Ascending aorta (tissue), 2 donors: ENCODE measurements at regions of chr1 and their contacts with region 1.

Region 1: GRCh38 chr1:115189814-115190539 is 100.7 kb upstream of the TSPAN2 start:
- DNase-seq: peak in 1 of 2 donors; percentile 71
- H3K4me3 ChIP-seq: no peak overlapping the region
- H3K27ac ChIP-seq: peak overlapping the region; percentile 89 to 95
- H3K4me1 ChIP-seq: peaks cover 15 to 34% of the 10 kb centered on the region in 2 donors
- H3K27me3 ChIP-seq: no peaks in the 10 kb centered on the region
- CTCF ChIP-seq: no peak

Region 2: DNA sequence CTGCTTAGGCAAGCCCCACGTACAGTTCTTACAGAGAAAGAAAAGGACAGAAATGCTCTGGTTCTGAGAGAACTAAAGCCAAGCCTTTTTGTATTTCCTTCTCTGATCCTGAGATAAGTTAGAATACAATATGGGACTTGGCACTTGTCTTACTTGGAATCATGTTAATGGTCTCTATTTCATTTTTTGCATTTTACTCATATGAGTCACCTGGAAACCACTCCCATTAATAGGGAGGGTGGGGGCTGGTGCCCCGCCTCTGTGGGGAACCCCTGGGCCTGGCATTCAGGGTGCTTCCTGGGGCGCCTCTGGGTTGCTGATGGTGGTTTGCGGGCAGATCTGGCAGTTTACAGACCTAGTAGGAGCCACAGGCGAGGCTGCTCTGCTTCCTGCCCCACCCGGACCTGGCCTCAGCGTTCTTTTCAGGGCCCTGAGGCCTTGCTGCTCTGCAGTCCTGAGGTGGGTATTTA is 127.4 kb before region 1 on chr1:
- intact Hi-C with region 1: loop called (anchors 10 kb)
- DNase-seq: peak; percentile 36 to 77
- H3K4me3 ChIP-seq: no peak overlapping the region
- H3K27ac ChIP-seq: peak overlapping the region; percentile 86 to 87
- H3K4me1 ChIP-seq: peaks cover 14 to 28% of the 10 kb centered on the region in 2 donors
- H3K27me3 ChIP-seq: no peaks in the 10 kb centered on the region
- CTCF ChIP-seq: no peak

Region 3: DNA sequence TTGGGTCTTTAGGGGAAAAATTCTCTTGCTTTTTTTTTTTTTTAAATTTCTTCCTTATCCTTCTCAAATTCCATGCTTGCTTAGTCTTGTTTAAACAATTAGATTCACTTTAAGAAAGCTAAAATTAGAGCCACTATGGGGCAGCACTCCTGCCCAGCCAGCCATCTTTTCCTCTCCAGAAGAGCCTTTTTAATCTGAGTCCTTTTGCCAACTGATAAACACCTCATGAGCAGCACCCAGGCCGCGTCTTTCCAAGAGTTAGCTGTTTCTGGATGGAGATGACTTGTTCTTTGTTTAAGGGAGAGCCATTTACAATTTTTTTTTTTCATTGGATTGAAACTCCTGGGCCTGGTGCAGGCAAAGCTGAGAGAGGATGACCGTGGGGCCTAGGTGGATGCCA is 47.4 kb before region 1 on chr1:
- intact Hi-C with region 1: no loop called
- DNase-seq: no peak
- H3K4me3 ChIP-seq: no peak overlapping the region
- H3K27ac ChIP-seq: peak overlapping the region; percentile 32 to 62
- H3K4me1 ChIP-seq: peaks cover 3 to 14% of the 10 kb centered on the region in 2 donors
- H3K27me3 ChIP-seq: no peaks in the 10 kb centered on the region
- CTCF ChIP-seq: peak in 1 of 3 experiments; percentile 11

Region 4: DNA sequence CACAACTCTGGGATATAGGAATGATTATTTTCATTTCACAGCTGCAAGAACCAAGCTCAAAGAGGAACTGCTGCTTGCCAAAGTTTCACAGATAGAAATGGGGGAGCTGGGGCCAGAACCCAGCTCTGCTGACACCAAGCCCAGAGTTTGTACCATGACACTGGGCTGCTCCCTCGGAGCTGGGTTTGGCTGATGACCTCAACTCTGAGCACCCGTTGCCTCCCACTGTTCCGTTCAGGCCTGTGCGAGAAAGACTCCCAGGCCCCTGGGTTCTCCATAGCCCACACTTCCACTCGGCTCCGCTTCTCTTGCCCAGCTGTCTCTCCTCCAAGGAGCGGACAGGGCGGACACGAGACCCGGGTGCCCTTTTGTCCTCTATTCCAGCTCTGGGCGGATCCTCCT is 92.8 kb after region 1 on chr1:
- intact Hi-C with region 1: loop called (anchors 5 kb)
- DNase-seq: peak; percentile 61 to 85
- H3K4me3 ChIP-seq: peak overlapping the region; percentile 4 to 51
- H3K27ac ChIP-seq: peak overlapping the region; percentile 91 to 95
- H3K4me1 ChIP-seq: peaks cover 11 to 31% of the 10 kb centered on the region in 2 donors
- H3K27me3 ChIP-seq: no peaks in the 10 kb centered on the region
- CTCF ChIP-seq: no peak

Region 5: DNA sequence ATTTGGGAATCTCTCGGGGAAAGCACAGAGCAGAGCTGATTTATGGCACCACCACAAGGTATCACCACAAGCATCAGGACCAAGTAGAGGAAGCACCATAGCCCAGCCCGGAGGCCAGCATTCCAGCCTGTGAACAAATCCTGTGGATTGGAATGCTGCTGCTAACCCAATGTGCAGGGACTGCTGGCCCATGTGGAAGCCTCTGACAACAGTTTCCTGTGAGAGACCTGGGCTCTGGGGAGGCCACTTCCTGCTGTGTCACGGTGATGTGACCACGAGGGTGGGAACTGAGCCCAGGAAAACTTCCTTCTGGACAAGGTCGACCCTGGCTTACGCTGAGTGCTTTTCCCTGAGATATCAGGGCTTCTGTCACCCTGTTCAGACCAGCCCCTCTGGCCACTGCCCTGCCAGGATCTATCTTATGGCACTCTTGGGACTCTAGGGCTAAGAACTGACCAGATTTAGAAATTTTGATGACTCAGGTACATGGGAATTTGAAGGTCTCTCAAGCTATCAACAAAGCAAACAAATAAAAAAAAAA is 236.3 kb after region 1 on chr1:
- intact Hi-C with region 1: loop called (anchors 5 kb)
- DNase-seq: peak; percentile 38 to 91
- H3K4me3 ChIP-seq: no peak overlapping the region
- H3K27ac ChIP-seq: peak overlapping the region; percentile 77 to 79
- H3K4me1 ChIP-seq: peaks cover 0 to 13% of the 10 kb centered on the region in 2 donors
- H3K27me3 ChIP-seq: no peaks in the 10 kb centered on the region
- CTCF ChIP-seq: no peak

Region 6: DNA sequence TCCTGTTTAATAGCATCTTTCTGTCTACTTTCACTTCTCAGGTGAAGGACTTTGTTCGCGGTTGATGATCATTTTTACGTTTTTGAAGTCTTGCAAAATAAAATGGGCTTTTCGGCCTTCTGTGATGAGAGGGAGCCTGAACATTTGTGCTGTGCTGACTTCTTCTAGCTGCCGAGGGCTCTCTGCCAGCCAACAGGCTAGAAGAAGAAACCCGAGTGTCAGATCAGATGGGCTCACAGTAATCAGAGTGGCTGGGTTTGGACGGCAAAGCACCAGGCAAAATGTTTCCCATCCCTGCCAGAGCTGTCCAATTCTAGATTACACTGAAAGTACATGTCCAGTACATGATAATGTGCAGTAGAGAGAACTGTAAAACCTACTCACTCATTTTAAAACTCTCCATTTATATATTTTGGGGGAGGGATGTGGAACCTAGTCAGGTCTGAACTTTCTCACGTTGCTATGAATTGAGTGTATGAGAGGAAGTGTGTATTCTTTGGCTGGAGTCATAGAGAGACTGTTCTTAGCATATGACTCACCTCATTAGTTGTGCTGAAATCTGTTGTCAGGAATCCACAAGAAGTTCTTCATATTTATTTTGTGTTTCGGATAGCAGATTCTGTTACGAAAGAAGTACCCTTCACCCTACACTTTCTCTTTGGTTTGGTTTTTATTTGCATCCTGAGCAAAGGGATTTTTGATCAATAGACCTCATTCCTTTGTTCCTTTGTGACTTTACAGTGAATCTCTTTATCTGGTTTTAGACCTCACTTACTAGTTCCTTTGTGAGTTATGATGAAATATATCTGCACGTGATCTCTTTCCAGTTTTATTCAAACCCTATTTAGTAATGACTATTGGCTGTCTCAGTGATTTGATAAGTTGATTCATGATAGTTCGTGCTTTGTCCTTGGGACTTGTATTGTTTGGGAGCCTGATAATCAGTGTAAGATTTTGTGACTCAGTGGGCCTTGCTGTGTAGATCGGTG is 1187.9 kb after region 1 on chr1:
- intact Hi-C with region 1: loop called (anchors 5 kb)
- DNase-seq: peak in 1 of 2 donors; percentile 75
- H3K4me3 ChIP-seq: peak overlapping the region; percentile 78 to 81
- H3K27ac ChIP-seq: peak overlapping the region; percentile 95 to 96
- H3K4me1 ChIP-seq: peaks cover 27 to 71% of the 10 kb centered on the region in 2 donors
- H3K27me3 ChIP-seq: no peaks in the 10 kb centered on the region
- CTCF ChIP-seq: no peak